Right ventricle myocardium inferior (tissue), 1 donor: ENCODE measurements at regions of chr6 and their contacts with region 1.

Region 1: GRCh38 chr6:36839749-36840431 is 646 bp upstream of the CPNE5 start:
- DNase-seq: peak; percentile 77
- ATAC-seq: peak; percentile 11

Region 2: GRCh38 chr6:36867471-36868224 is 27.8 kb after region 1 on chr6:
- intact Hi-C with region 1: loop called (anchors 2 kb)
- DNase-seq: peak; percentile 73
- ATAC-seq: peak; percentile 90

Region 3: GRCh38 chr6:36969988-36970891 is 130.3 kb after region 1 on chr6:
- intact Hi-C with region 1: loop called (anchors 2 kb)
- DNase-seq: no peak
- ATAC-seq: no peak